A673 (cell line): ENCODE measurements at regions of chr14 and their contacts with region 1.

Region 1: DNA sequence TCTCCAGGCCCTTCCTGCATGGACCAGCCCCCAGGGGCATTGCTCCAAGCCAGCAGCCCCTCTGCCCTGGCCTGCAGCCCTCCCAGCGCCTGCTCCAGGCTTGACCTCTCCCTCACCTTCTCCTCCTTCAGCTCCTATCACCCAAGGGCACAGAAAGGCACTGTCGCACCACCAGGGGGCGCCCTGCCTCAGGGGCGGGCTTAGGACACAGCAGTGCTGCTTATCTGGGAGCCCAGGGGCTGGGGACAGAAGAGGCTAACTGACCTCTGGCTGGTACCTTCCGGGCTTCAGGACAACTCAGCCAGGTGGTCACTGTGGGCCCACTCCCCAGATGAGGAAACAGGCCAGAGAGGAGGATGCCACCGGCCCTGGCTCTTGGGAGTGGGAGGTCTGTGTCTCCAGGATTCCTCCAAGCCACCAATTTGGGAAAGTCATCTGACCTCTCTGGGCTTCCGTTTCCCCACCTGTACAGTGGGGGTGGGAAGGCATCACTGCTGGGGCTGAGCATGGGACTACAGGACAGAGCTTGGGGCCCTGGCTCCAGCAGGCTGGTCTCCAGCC is 25.3 kb upstream of the GPR132 start:
- DNase-seq: peak; percentile 84
- H3K4me3 ChIP-seq: no peak overlapping the region
- H3K27ac ChIP-seq: no peak overlapping the region
- H3K4me1 ChIP-seq: peaks cover 19% of the 10 kb centered on the region
- H3K27me3 ChIP-seq: no peaks in the 10 kb centered on the region
- CTCF ChIP-seq: peak; percentile 99

Region 2: GRCh38 chr14:105173901-105174894 is 83.6 kb after region 1 on chr14:
- CTCF ChIA-PET with region 1: no interaction called
- POLR2A ChIA-PET with region 1: no interaction called
- intact Hi-C with region 1: loop called (anchors 5 kb)
- DNase-seq: no peak
- H3K4me3 ChIP-seq: no peak overlapping the region
- H3K27ac ChIP-seq: no peak overlapping the region
- H3K4me1 ChIP-seq: peaks cover 40% of the 10 kb centered on the region
- H3K27me3 ChIP-seq: no peaks in the 10 kb centered on the region
- CTCF ChIP-seq: no peak

Region 3: DNA sequence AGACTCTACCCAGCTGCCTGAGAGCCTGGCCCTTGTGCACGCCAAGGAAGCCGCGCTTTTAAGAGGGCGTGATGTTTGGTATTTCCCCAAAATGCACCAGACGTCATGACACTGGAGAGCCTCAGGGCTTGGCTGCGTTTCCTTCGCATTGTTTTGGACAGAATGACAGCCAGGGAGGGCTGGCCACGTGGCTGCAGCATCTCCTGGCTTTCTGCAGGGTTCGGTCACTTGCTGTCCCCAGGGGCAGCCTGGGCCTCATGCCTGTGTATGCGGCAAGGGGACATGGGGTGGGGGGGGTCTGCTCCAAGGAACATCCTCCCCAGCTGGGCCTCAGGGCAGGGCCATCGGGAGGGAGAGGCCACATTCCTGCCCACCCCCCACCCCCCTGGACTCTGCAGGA is 106.7 kb after region 1 on chr14:
- CTCF ChIA-PET with region 1: interaction called, 3 read pairs
- POLR2A ChIA-PET with region 1: no interaction called
- intact Hi-C with region 1: loop called (anchors 5 kb)
- DNase-seq: no peak
- H3K4me3 ChIP-seq: no peak overlapping the region
- H3K27ac ChIP-seq: no peak overlapping the region
- H3K4me1 ChIP-seq: peaks cover 39% of the 10 kb centered on the region
- H3K27me3 ChIP-seq: no peaks in the 10 kb centered on the region
- CTCF ChIP-seq: no peak

Region 4: DNA sequence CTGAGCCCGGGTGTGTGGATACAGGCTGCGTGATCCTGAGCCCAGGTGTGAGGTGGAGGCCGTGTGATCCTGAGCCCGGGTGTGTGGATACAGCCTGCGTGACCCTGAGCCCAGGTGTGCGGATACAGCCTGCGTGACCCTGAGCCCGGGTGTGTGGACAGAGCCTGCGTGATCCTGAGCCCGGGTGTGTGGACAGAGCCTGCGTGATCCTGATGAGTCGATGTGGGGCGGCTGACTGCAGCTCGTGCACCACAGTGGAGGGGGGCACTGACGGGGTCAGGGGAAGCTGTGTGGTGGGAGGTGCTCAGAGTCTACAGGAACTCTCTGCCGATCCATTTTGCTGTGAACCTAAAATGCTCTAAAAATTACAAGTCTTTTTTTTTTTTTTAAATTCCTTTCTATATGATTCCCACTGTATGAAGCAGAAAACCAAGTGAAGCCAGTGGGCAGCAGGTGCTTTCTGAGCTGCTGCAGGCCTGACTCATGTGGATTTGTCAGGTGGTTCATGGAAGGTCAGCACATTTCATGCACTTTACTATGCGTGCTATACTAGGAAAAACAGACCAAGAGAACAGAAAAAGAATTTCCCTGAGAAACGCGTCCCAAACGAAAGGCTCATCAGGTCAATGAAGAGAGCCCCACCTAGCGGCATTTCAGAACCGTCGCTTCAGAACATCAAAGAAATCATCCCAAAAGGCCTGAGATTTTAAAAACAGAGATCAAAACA is 191.0 kb after region 1 on chr14:
- CTCF ChIA-PET with region 1: no interaction called
- POLR2A ChIA-PET with region 1: no interaction called
- intact Hi-C with region 1: loop called (anchors 5 kb)
- DNase-seq: peak; percentile 73
- H3K4me3 ChIP-seq: no peak overlapping the region
- H3K27ac ChIP-seq: no peak overlapping the region
- H3K4me1 ChIP-seq: no peaks in the 10 kb centered on the region
- H3K27me3 ChIP-seq: no peaks in the 10 kb centered on the region
- CTCF ChIP-seq: peak; percentile 83

Region 5: GRCh38 chr14:105351920-105352851 is 261.6 kb after region 1 on chr14:
- CTCF ChIA-PET with region 1: interaction called, 11 read pairs
- POLR2A ChIA-PET with region 1: no interaction called
- intact Hi-C with region 1: loop called (anchors 2 kb)
- DNase-seq: peak; percentile 93
- H3K4me3 ChIP-seq: no peak overlapping the region
- H3K27ac ChIP-seq: peak overlapping the region; percentile 24
- H3K4me1 ChIP-seq: peaks cover 8% of the 10 kb centered on the region
- H3K27me3 ChIP-seq: no peaks in the 10 kb centered on the region
- CTCF ChIP-seq: peak; percentile 93

Region 6: GRCh38 chr14:105581551-105582341 is 491.2 kb after region 1 on chr14:
- CTCF ChIA-PET with region 1: no interaction called
- POLR2A ChIA-PET with region 1: no interaction called
- intact Hi-C with region 1: no loop called
- DNase-seq: no peak
- H3K4me3 ChIP-seq: no peak overlapping the region
- H3K27ac ChIP-seq: no peak overlapping the region
- H3K4me1 ChIP-seq: no peaks in the 10 kb centered on the region
- H3K27me3 ChIP-seq: no peaks in the 10 kb centered on the region
- CTCF ChIP-seq: no peak